Gastrocnemius medialis (tissue), 4 donors: ENCODE measurements at regions of chr9 and their contacts with region 1.

Region 1: DNA sequence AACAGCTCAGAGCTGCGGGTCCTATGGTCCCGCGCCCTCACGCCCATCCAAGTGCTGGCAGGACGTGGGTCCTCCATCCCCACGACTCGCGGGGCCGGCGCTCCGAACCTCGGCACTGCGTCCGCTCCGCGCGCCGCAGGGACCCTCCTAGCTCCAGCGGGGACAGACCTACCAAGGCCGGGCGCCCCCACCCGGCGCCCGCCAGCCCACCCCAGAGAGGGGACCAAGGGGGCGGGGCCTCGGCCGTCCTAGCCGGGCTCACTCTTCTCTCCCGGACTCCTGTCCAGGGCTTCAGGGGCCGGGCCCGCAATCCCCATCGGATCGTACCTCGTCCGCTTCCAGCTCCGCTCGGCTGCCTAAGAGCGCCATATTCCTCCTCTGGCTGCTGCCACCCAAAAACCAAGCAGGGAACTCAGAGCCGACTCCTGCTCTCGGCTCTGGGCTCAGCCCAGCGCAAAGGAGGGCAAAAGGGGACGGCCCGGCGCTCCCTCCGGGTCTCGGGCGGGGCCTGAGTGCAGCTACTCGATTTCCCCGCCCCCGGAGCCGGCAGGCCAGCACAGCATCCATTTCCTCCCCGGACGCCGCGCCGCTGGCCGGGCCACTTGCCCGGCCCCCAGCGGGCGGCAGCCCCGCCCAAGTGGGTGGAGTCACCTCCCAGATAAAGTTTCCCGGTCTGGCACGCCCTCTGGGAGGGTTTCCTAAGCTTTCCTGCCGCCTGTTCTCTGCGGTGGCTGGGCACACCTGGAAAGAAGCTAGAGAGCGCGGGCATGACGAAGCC is at the start of gene TTC39B:
- DNase-seq: peak; percentile 82 to 86
- ATAC-seq: peak; percentile 82 to 84
- H3K4me3 ChIP-seq: peak within 1 kb of the TSS; percentile 83 to 97 (median 90)
- H3K27ac ChIP-seq: peak within 1 kb of the TSS; percentile 80 to 92 (median 89)
- H3K4me1 ChIP-seq: peaks cover 11 to 13% of the 10 kb centered on the region in 2 donors
- H3K27me3 ChIP-seq: no peaks in the 10 kb centered on the region
- CTCF ChIP-seq: peak in 1 of 5 experiments; percentile 14
- POLR2A ChIP-seq: peak; percentile 56 to 77
- total RNA-seq, gene TTC39B: 1.8 to 6.9 (median 3.8) TPM

Region 2: GRCh38 chr9:15142878-15143534 is 163.9 kb before region 1 on chr9:
- in situ Hi-C with region 1: no loop called
- intact Hi-C with region 1: loop called (anchors 10 kb)
- DNase-seq: no peak
- ATAC-seq: peak in 1 of 2 donors; percentile 68
- H3K4me3 ChIP-seq: no peak overlapping the region
- H3K27ac ChIP-seq: no peak overlapping the region
- H3K4me1 ChIP-seq: peaks cover 5 to 9% of the 10 kb centered on the region in 2 donors
- H3K27me3 ChIP-seq: no peaks in the 10 kb centered on the region
- CTCF ChIP-seq: peak; percentile 36 to 77 (median 51)
- POLR2A ChIP-seq: no peak

Region 3: GRCh38 chr9:15416880-15417279 is 109.9 kb after region 1 on chr9:
- in situ Hi-C with region 1: loop called in 2 of 4 experiments (anchors 5 to 10 kb)
- intact Hi-C with region 1: loop called (anchors 5 kb)
- DNase-seq: no peak
- ATAC-seq: no peak
- H3K4me3 ChIP-seq: no peak overlapping the region
- H3K27ac ChIP-seq: no peak overlapping the region
- H3K4me1 ChIP-seq: no peaks in the 10 kb centered on the region
- H3K27me3 ChIP-seq: no peaks in the 10 kb centered on the region
- CTCF ChIP-seq: no peak
- POLR2A ChIP-seq: no peak

Region 4: DNA sequence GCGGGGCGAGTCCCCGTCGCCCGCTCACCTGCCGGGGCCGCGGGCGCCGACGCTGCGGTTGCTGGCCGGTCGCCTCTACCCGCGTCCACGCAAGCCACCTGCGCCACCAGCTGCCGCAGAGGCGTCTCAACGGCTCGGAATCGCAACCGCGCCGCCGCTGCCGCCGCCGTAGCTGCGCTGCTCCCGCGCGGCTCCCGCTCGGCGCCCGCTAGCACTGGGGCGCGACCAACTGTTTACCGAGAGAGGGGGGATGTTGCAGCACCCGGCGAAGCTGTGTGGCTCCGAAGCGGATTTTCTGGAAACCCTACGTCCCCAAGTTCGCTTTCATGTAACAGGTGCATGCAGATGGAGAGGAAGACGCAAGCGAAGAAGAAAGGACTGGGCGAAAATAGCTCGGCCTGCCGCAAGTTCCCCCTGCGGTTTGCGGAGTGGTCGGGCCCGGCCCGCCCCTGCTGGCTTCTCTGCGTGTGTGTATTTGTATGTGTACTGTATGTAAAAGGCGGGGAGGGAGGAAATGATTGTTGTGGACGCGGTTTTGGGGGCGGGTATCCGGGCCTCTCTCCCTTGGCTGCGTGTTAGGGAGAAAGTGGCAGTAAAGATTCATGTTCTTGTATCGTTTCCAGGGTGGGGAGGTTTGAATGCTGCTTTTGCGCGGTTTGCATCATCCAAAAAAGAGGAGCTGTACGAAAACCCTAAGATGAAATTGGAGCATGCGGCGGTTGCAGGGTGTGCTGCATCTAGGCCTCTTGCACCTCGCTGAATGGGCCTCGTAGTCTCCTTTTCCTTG is 204.0 kb after region 1 on chr9 and contains the start of gene PSIP1:
- in situ Hi-C with region 1: no loop called
- intact Hi-C with region 1: loop called (anchors 5 kb)
- DNase-seq: peak; percentile 32 to 52
- ATAC-seq: peak; percentile 92
- H3K4me3 ChIP-seq: peak within 1 kb of the TSS; percentile 74 to 92 (median 86)
- H3K27ac ChIP-seq: peak within 1 kb of the TSS; percentile 75 to 92 (median 89)
- H3K4me1 ChIP-seq: peaks cover 5 to 18% of the 10 kb centered on the region in 2 donors
- H3K27me3 ChIP-seq: no peaks in the 10 kb centered on the region
- CTCF ChIP-seq: peak in 4 of 5 experiments; percentile 6 to 31 (median 21)
- POLR2A ChIP-seq: peak; percentile 36 to 46
- total RNA-seq, gene PSIP1: 11.7 to 21.3 (median 12.5) TPM

Region 5: GRCh38 chr9:15522130-15522755 is 215.3 kb after region 1 on chr9:
- in situ Hi-C with region 1: no loop called
- intact Hi-C with region 1: no loop called
- DNase-seq: no peak
- ATAC-seq: no peak
- H3K4me3 ChIP-seq: no peak overlapping the region
- H3K27ac ChIP-seq: no peak overlapping the region
- H3K4me1 ChIP-seq: no peaks in the 10 kb centered on the region
- H3K27me3 ChIP-seq: no peaks in the 10 kb centered on the region
- CTCF ChIP-seq: no peak
- POLR2A ChIP-seq: no peak

Region 6: GRCh38 chr9:17134396-17135294 is 1827.7 kb after region 1 on chr9 and contains the start of gene CNTLN:
- in situ Hi-C with region 1: no loop called
- intact Hi-C with region 1: loop called (anchors 10 kb)
- DNase-seq: peak; percentile 71 to 80
- ATAC-seq: peak; percentile 88 to 92
- H3K4me3 ChIP-seq: peak within 1 kb of the TSS; percentile 70 to 93 (median 83)
- H3K27ac ChIP-seq: peak within 1 kb of the TSS; percentile 78 to 85 (median 82)
- H3K4me1 ChIP-seq: peaks cover 5 to 10% of the 10 kb centered on the region in 2 donors
- H3K27me3 ChIP-seq: no peaks in the 10 kb centered on the region
- CTCF ChIP-seq: peak in 1 of 5 experiments; percentile 8
- POLR2A ChIP-seq: peak; percentile 48 to 58
- total RNA-seq, gene CNTLN: 1.3 to 6.6 (median 2.4) TPM